ENCODE measurements at regions of chr1 and their contacts with region 1.

Region 1: DNA sequence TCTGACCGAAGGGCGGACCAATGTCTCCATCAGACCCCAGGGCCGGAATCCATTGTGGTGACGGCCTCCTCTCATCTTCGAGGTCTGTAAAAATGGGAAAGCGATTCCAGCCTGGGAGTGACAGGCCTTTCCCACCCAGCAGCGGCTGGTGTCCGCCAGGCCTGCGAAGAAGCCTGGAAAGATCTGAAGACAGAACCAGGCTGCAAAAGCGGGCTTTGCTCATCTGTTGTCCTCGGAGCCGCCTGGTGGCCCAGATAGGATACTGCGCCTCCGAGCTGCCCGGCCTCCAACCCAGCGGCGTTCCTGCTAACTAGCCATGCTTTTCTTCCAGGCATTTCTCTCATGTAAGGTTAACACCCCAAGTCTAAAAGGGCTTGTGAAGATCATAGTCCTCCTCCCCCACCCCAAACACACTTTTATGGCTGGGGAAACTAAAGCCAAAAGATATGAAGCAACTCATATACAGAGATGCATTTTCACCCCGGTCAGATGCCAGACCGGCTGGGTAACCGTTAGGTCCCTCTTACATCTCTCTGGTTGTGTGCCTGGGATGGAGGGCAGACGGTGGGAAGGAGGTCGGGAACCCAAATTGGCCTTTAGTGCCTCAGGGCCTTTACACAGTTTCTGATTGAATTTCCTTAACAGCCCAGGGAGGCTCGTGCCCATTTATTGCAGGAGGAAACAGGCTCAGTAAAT is 1.9 kb upstream of the DHRS3 start:
- DNase-seq: peak; percentile 93
- H3K4me3 ChIP-seq: peak overlapping the region in 1 of 2 donors; percentile 70
- H3K27ac ChIP-seq: peak overlapping the region; percentile 43 to 68
- H3K4me1 ChIP-seq: peaks cover 29% of the 10 kb centered on the region
- H3K27me3 ChIP-seq: no peaks in the 10 kb centered on the region
- CTCF ChIP-seq: peak; percentile 90 to 97 (median 95)
- POLR2A ChIP-seq: no peak

Region 2: GRCh38 chr1:12314333-12314903 is 305.5 kb before region 1 on chr1:
- intact Hi-C with region 1: loop called (anchors 10 kb)
- DNase-seq: no peak
- H3K4me3 ChIP-seq: no peak overlapping the region
- H3K27ac ChIP-seq: no peak overlapping the region
- H3K4me1 ChIP-seq: peaks cover 6% of the 10 kb centered on the region
- H3K27me3 ChIP-seq: no peaks in the 10 kb centered on the region
- CTCF ChIP-seq: peak in 1 of 3 experiments; percentile 32
- POLR2A ChIP-seq: no peak

Region 3: DNA sequence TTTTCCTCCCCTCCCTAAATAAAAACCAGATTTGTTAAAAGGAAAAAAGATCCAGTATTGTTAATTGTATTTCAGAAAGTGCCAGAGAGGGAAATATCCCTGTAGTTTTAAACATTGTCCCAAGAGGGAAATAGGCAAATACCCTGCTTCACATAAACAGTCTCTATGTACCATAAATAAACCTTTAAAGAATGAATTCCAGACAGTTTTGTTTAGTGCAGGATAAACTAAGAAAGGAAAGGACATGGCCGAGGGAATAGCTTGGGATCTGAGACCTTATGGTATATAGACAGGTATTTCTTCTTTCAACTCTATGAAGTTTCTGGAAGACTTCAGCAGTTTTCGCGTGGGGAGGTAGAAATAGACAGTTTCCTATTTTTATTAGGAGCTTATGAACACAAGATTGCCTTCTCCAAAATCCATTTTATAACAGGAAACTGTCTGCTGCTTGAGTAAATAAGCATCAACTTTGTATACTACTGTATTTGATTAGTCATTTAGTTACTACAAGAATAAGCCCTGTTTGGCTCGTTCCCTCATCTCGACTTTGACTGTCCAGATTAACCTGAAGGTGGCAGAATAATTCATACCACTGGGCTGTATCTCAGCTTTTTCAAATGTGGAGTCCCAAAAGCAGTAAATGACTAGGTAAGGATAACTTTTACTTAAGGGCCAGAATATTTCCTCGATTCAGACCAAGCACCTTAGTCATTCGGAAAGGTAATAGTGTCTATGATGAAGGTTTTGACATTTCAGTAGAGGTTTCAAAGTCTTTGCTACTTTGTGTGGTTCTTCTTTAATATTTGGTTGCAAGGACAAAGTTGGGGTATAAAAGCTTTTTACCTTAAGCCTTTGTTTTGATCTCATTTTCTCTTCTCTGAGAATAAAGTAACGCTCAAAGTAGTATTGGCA is 212.6 kb before region 1 on chr1:
- intact Hi-C with region 1: loop called (anchors 10 kb)
- DNase-seq: peak; percentile 34
- H3K4me3 ChIP-seq: no peak overlapping the region
- H3K27ac ChIP-seq: no peak overlapping the region
- H3K4me1 ChIP-seq: peaks cover 15% of the 10 kb centered on the region
- H3K27me3 ChIP-seq: no peaks in the 10 kb centered on the region
- CTCF ChIP-seq: peak in 1 of 3 experiments; percentile 24
- POLR2A ChIP-seq: no peak

Region 4: GRCh38 chr1:12778907-12779306 is 159.0 kb after region 1 on chr1:
- intact Hi-C with region 1: no loop called
- DNase-seq: no peak
- H3K4me3 ChIP-seq: no peak overlapping the region
- H3K27ac ChIP-seq: no peak overlapping the region
- H3K4me1 ChIP-seq: no peaks in the 10 kb centered on the region
- H3K27me3 ChIP-seq: no peaks in the 10 kb centered on the region
- CTCF ChIP-seq: no peak
- POLR2A ChIP-seq: no peak